ENCODE measurements at regions of chr22 and their contacts with region 1.

Region 1: GRCh38 chr22:20456064-20456721 is 18.6 kb upstream of the SCARF2 start:
- DNase-seq: peak; percentile 82
- H3K4me3 Mint-ChIP-seq: no peak overlapping the region
- H3K27ac Mint-ChIP-seq: no peak overlapping the region
- H3K4me1 Mint-ChIP-seq: peaks cover 23% of the 10 kb centered on the region
- H3K27me3 Mint-ChIP-seq: no peaks in the 10 kb centered on the region

Region 2: DNA sequence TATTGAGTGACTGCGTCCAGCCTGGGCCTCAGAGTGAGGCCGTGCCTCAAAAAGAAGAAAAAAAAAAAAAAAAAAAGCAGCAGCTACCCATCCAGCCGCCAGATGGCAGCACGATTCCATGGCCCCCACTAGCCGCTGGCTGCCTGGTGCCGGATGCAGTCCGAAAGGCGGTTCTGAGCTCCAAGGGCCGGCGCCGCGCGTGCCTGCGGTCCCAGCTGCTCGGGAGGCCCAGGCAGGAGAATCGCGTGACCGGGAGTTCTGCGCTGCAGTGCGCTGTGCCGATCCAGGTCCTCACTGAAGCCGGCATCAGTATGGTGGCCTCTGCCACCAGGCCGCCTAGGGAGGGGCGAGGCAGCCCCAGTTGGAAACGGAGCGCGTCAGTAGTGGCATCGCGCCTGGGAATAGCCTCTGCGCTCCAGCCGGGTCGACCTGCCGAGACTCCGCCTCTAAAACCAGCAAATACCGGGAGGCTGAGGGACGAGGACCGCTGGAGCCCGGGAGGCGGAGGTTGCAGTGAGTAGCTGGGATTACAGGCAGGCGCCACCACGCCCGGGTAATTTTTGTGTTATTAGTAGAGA is 37.9 kb before region 1 on chr22:
- CTCF ChIA-PET with region 1: interaction called, 47 read pairs
- DNase-seq: peak; percentile 82
- H3K4me3 Mint-ChIP-seq: peak overlapping the region; percentile 42
- H3K27ac Mint-ChIP-seq: no peak overlapping the region
- H3K4me1 Mint-ChIP-seq: peaks cover 4% of the 10 kb centered on the region
- H3K27me3 Mint-ChIP-seq: peaks cover 32% of the 10 kb centered on the region

Region 3: DNA sequence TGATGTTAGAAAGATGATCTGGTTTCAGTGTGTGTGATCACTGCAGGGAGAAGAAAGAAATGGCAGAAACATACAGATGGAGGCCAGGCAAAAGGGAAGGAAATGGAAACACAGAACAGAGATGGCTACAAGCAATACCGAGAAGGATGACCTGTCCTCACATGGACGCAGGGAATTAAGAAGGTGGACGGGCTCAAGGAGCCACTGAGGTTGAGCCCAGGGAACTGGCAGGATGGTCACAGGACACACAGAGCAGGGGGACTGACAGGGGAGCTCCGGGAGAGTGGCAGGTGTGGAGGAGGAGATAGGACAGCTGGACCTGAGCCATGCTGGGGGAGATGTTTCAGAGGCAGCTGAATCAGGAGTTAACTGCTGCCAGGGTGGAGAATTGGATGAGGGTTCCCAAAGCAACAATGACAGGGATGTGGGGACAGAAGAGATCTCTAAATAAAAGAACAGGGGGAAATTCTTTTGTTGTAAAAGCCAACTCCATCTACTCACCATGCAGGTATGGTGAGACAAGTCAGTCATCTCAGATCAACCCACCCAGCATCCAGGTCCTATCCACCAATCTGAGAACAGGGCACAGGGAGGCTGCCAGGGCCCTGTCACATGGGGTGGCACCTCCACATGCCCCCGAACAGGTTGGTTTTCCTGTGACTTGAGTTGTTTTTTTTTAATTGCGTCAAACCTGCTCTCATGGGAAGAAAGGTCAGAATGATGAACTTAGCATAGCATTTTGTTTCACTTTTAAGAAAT is 13.1 kb after region 1 on chr22:
- CTCF ChIA-PET with region 1: interaction called, 13 read pairs
- DNase-seq: no peak
- H3K4me3 Mint-ChIP-seq: no peak overlapping the region
- H3K27ac Mint-ChIP-seq: peak overlapping the region; percentile 69
- H3K4me1 Mint-ChIP-seq: peaks cover 48% of the 10 kb centered on the region
- H3K27me3 Mint-ChIP-seq: no peaks in the 10 kb centered on the region

Region 4: DNA sequence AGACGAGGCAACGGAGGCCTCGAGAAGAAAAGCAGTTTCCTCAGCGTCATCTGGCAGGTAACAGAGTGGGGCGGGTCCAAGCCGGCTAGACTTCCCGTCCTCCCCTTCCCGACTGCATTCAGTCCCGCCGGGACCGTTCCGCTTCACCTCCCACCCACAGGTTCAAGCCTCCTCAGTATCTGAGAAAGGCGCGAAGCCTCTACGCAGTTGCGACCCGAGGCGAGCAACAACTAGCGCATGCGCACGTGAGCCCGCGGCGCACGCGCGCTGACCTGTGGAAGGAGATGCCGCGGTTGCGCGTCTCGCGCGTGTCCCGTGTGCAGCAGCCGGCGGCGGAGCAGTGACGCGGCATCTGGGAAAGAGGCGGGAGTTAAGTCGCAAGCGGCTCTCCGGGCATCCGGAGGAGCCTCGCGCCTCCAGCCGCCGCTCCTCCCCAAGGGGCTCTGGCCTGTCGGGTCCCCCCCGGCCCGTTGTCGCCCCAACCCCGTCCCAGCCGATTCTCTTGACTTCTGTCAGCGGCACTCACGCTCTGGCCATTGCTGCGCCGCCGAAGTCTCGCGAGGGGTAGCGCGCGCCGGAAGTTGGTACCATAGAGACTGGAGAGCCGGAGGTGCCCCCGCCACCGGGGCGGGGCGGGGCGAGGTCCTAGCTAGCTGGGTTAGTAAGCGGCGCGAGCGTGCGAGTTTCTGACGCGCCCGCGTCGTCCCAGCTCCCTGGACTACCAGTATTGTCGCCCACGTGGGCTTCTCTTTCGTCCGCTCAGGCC is 545.5 kb after region 1 on chr22 and contains the start of gene THAP7:
- CTCF ChIA-PET with region 1: no interaction called
- DNase-seq: peak; percentile 98
- H3K4me3 Mint-ChIP-seq: peak within 1 kb of the TSS; percentile 94
- H3K27ac Mint-ChIP-seq: peak within 1 kb of the TSS; percentile 96
- H3K4me1 Mint-ChIP-seq: peaks cover 39% of the 10 kb centered on the region
- H3K27me3 Mint-ChIP-seq: no peaks in the 10 kb centered on the region

Measured in activated naive CD4-positive, alpha-beta T cell treated with anti-CD3 and anti-CD28 coated beads, Interleukin-2, amount 10 ng/mL, durations not matched to agents 7 days and 5 days (primary cell).